ENCODE measurements at regions of chr17 and their contacts with region 1.

Region 1: GRCh38 chr17:82668631-82669099 is 20.4 kb upstream of the WDR45B start:
- DNase-seq: peak; percentile 83 to 84
- ATAC-seq: peak; percentile 97 to 99
- H3K4me3 ChIP-seq: peak overlapping the region; percentile 7; the same call in 1 of the 3 replicates
- H3K27ac ChIP-seq: peak overlapping the region; percentile 48 to 79; a peak in 5 of 6 replicates
- H3K4me1 ChIP-seq: peaks cover 6% of the 10 kb centered on the region; the same call in 2 of the 3 replicates
- CTCF ChIP-seq: peak; percentile 89
- EP300 ChIP-seq: no peak
- POLR2A ChIP-seq: no peak
- RAD21 ChIP-seq: peak; percentile 92 to 97

Region 2: DNA sequence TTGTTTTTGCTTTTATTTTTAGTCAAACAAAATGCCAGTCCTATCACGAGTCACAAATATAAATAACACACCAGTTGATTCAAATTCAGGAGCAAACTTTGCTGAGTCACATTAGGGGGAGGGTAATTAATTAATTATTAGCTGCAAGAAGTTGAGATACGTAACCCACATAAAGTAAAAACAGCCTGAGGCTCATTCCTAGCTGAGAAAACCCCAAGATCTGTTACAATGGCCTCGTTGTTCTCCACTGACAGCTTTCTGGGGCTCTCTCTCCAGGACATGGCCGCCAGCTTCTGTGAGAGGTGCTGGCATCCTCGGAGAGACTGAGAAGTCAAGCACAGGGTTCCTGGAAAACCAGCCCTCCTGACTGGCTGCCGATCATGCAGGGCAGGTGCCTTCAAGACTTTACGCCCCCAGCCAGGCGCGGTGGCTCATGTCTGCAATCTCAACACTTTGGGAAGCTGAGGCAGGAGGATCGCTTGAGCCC is 18.8 kb after region 1 on chr17:
- CTCF ChIA-PET with region 1: interaction called, 62 read pairs
- POLR2A ChIA-PET with region 1: interaction called, 3 read pairs
- DNase-seq: peak; percentile 83
- ATAC-seq: peak; percentile 48 to 75; a peak in 5 of 6 replicates
- H3K4me3 ChIP-seq: 0 out of 3 replicates have a peak overlapping the region, but pooled peaks have one; percentile 2
- H3K27ac ChIP-seq: peak overlapping the region; percentile 87 to 89
- H3K4me1 ChIP-seq: peaks cover 41% of the 10 kb centered on the region
- CTCF ChIP-seq: no peak
- EP300 ChIP-seq: peak in 1 of 2 experiments; percentile 17; a peak in 1 of 5 replicates
- POLR2A ChIP-seq: no peak
- RAD21 ChIP-seq: peak in 1 of 2 experiments; percentile 15; a peak in 1 of 5 replicates

Region 3: DNA sequence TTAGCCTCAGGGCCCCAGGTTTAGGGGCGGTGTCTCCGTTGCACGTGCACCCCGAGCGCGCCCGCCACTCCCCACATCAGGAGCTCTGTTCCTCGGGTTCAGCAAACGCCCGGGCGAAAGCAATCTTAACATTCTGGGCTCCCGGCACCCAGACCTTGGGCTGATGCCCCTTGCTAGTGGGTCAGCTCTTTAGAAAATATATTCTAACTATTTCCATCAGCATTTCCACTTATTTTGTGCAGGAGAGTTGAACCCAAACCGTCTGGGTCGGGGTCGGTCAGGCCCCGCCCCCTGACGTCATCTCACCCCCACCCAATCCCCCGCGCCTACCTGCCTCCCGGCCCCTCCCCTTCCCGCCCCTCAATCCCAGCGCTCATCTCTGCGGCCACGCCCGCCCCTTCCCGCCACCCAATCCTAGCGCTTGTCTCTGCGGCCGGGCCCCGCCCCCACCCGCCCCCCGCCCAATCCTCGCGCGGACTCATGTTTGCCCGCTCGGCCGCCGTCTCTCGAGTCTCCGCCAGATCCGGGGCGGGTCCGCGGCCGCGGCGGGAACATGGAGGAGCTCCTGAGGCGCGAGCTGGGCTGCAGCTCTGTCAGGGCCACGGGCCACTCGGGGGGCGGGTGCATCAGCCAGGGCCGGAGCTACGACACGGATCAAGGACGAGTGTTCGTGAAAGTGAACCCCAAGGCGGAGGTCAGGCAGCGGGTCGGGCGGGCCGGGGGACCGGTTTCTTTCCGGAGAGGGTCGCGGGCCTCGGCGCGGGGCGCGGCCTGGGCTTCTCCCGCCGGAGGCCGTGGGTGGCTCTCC is 47.7 kb after region 1 on chr17 and contains the start of gene FN3KRP:
- CTCF ChIA-PET with region 1: interaction called, 15 read pairs
- POLR2A ChIA-PET with region 1: interaction called, 4 read pairs
- DNase-seq: peak; percentile 96 to 99
- ATAC-seq: peak; percentile 85 to 92
- H3K4me3 ChIP-seq: peak within 1 kb of the TSS; percentile 76
- H3K27ac ChIP-seq: peak within 1 kb of the TSS; percentile 70 to 87
- H3K4me1 ChIP-seq: peaks cover 10% of the 10 kb centered on the region
- CTCF ChIP-seq: no peak
- EP300 ChIP-seq: no peak
- POLR2A ChIP-seq: peak; percentile 79
- RAD21 ChIP-seq: no peak
- polyA plus RNA-seq, gene FN3KRP: 41.1 and 41.7 TPM in 2 replicates

Region 4: GRCh38 chr17:82734987-82735866 is 66.6 kb after region 1 on chr17 and contains the start of gene FN3K:
- CTCF ChIA-PET with region 1: interaction called, 23 read pairs
- POLR2A ChIA-PET with region 1: no interaction called
- DNase-seq: peak; percentile 50 to 74
- ATAC-seq: peak; percentile 82 to 87
- H3K4me3 ChIP-seq: peak within 1 kb of the TSS; percentile 57
- H3K27ac ChIP-seq: peak within 1 kb of the TSS; percentile 88 to 89
- H3K4me1 ChIP-seq: no peaks in the 10 kb centered on the region
- CTCF ChIP-seq: no peak
- EP300 ChIP-seq: no peak
- POLR2A ChIP-seq: peak; percentile 55
- RAD21 ChIP-seq: no peak
- polyA plus RNA-seq, gene FN3K: 1.3 and 1.7 TPM in 2 replicates

Region 5: DNA sequence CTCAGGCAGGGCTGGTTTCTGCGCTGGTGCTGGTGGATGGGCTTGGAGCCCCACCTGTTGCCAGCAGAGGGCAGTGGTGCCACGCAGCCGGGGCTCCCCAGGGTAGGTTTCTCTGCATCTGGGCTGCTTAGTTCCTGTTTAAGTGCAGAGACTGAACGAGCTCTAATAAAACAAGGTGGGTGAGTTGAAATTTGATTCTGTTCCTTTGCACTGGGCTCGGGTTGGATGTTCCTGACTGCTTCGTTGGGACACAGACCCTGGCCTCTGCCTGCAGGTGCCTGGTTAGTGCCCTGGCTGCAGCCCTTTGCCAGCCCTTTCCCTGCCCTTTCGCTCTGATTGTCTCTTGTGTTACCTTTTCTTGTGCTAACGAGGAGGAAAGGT is 113.2 kb after region 1 on chr17:
- CTCF ChIA-PET with region 1: interaction called, 450 read pairs
- POLR2A ChIA-PET with region 1: no interaction called
- DNase-seq: peak; percentile 72 to 99
- ATAC-seq: peak; percentile 97 to 98
- H3K4me3 ChIP-seq: no peak overlapping the region
- H3K27ac ChIP-seq: no peak overlapping the region
- H3K4me1 ChIP-seq: no peaks in the 10 kb centered on the region
- CTCF ChIP-seq: peak; percentile 99
- EP300 ChIP-seq: no peak
- POLR2A ChIP-seq: no peak
- RAD21 ChIP-seq: peak; percentile 97 to 98

Region 6: GRCh38 chr17:82854221-82854620 is 185.6 kb after region 1 on chr17:
- CTCF ChIA-PET with region 1: no interaction called
- POLR2A ChIA-PET with region 1: no interaction called
- DNase-seq: no peak
- ATAC-seq: no peak
- H3K4me3 ChIP-seq: no peak overlapping the region
- H3K27ac ChIP-seq: no peak overlapping the region
- H3K4me1 ChIP-seq: no peaks in the 10 kb centered on the region
- CTCF ChIP-seq: no peak
- EP300 ChIP-seq: no peak
- POLR2A ChIP-seq: no peak
- RAD21 ChIP-seq: no peak

Measured in A549 (cell line).